ENCODE measurements at regions of chr6 and their contacts with region 1.

Region 1: DNA sequence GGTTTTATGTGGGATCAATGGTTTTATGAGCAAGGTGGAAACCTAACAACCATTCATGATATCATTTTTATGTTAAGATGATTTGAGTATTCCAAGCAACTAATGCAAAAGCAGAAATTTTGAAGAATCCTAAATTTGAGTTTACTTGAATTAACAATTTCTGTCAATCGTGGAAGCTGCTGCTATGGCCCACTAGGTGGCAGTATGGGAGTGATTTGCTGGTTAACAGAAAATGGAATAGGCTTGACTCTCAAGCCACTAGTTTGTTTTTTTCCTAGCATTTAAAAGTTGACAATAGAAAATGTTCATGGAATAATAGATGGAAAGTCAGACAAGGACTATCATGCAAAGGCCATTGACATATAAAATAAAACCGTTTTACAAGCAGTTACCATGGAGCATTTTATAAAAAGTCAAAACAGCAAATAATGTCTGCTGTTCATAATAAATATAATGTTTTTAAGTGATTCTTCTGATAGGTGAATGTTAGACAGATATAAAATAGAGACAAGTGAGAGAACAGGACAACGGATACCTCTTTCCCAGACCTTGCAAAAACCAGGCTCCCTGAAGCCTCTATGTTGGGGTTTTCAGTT is 43.0 kb upstream of the TMEM200A start:
- DNase-seq: peak; percentile 82
- ATAC-seq: peak; percentile 82
- H3K4me3 ChIP-seq: no peak overlapping the region
- H3K27ac ChIP-seq: no peak overlapping the region
- H3K4me1 ChIP-seq: 0 out of 2 replicates have a peak, but pooled peaks cover 1% of the 10 kb centered on the region
- H3K27me3 ChIP-seq: no peaks in the 10 kb centered on the region; the same call in 1 of the 2 replicates
- CTCF ChIP-seq: peak; percentile 96
- POLR2A ChIP-seq: peak; percentile 32; the same call in 1 of the 2 replicates
- RAD21 ChIP-seq: peak; percentile 91

Region 2: GRCh38 chr6:130240232-130240631 is 82.5 kb before region 1 on chr6:
- CTCF ChIA-PET with region 1: no interaction called
- POLR2A ChIA-PET with region 1: no interaction called
- dilution Hi-C with region 1: no loop called
- in situ Hi-C with region 1: no loop called
- intact Hi-C with region 1: no loop called
- DNase-seq: peak; percentile 78
- ATAC-seq: peak; percentile 72
- H3K4me3 ChIP-seq: no peak overlapping the region
- H3K27ac ChIP-seq: no peak overlapping the region
- H3K4me1 ChIP-seq: no peaks in the 10 kb centered on the region
- H3K27me3 ChIP-seq: no peaks in the 10 kb centered on the region
- CTCF ChIP-seq: no peak
- POLR2A ChIP-seq: no peak
- RAD21 ChIP-seq: no peak

Region 3: GRCh38 chr6:130426066-130426721 is 103.4 kb after region 1 on chr6:
- CTCF ChIA-PET with region 1: no interaction called
- POLR2A ChIA-PET with region 1: no interaction called
- dilution Hi-C with region 1: no loop called
- in situ Hi-C with region 1: no loop called
- intact Hi-C with region 1: loop called (anchors 5 kb)
- DNase-seq: peak; percentile 67
- ATAC-seq: peak; percentile 27
- H3K4me3 ChIP-seq: no peak overlapping the region
- H3K27ac ChIP-seq: no peak overlapping the region
- H3K4me1 ChIP-seq: peaks cover 7% of the 10 kb centered on the region
- H3K27me3 ChIP-seq: no peaks in the 10 kb centered on the region
- CTCF ChIP-seq: no peak
- POLR2A ChIP-seq: no peak
- RAD21 ChIP-seq: no peak

Region 4: GRCh38 chr6:130760006-130760405 is 437.2 kb after region 1 on chr6:
- CTCF ChIA-PET with region 1: interaction called, 3 read pairs
- POLR2A ChIA-PET with region 1: no interaction called
- dilution Hi-C with region 1: no loop called
- in situ Hi-C with region 1: no loop called
- intact Hi-C with region 1: loop called (anchors 1 kb)
- DNase-seq: peak; percentile 61
- ATAC-seq: peak; percentile 83
- H3K4me3 ChIP-seq: no peak overlapping the region
- H3K27ac ChIP-seq: no peak overlapping the region
- H3K4me1 ChIP-seq: no peaks in the 10 kb centered on the region
- H3K27me3 ChIP-seq: peaks cover 8% of the 10 kb centered on the region
- CTCF ChIP-seq: peak; percentile 85
- POLR2A ChIP-seq: no peak
- RAD21 ChIP-seq: peak; percentile 88

Region 5: DNA sequence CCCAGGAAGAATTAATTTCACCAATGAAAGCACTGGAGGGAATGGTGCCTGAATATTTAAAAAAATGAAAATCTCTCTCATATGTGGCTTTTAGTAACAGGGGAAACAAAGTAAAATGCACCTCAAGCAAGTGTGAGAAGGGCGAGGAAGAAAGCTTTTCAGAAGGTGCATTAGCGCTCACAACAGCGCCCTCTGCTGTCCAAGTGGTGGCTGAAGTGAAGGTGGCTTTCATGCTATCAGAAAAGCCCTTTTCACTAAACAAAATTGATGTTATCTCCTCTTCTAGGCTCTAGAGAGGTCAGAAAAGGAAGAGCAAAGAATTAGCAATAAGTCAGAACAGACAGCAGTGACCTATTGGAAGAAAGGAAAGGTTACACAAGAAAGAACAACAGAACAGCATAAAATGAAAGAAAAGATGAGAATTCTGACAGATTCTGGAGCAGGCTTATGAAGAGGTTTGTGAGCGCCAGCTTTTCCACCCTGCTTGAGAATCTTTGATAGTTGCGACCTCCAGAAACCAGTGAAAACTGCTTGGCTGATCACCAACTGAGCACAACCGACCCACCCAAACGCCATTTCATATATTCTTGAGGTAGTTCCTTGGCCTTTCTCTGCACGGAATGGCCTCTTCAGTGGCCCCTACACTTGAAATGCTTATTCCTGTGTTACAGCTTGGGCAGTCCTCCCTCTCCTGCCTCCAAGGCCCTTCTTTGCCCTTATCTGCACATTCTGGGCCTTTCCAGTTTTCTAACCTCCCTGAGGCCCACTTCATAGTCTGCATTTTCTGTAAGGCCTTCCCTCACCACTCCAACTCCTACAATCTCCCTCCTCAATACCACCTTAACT is 549.7 kb after region 1 on chr6:
- CTCF ChIA-PET with region 1: no interaction called
- POLR2A ChIA-PET with region 1: no interaction called
- dilution Hi-C with region 1: no loop called
- in situ Hi-C with region 1: no loop called
- intact Hi-C with region 1: loop called (anchors 1 kb)
- DNase-seq: peak; percentile 44
- ATAC-seq: peak; percentile 67
- H3K4me3 ChIP-seq: no peak overlapping the region
- H3K27ac ChIP-seq: no peak overlapping the region
- H3K4me1 ChIP-seq: no peaks in the 10 kb centered on the region
- H3K27me3 ChIP-seq: no peaks in the 10 kb centered on the region
- CTCF ChIP-seq: peak; percentile 76
- POLR2A ChIP-seq: no peak
- RAD21 ChIP-seq: peak; percentile 64

Measured in IMR-90 (cell line).